ENCODE measurements at regions of chr3 and their contacts with region 1.

Region 1: GRCh38 chr3:50227390-50228183 is 8.4 kb upstream of the GNAI2 start:
- DNase-seq: peak; percentile 89 to 94
- H3K4me3 ChIP-seq: peak overlapping the region; percentile 51 to 88 (median 73)
- H3K27ac ChIP-seq: peak overlapping the region; percentile 86
- H3K4me1 ChIP-seq: peaks cover 0 to 18% (median 6%) of the 10 kb centered on the region in 4 experiments; a peak in 6 of 7 replicates
- H3K27me3 ChIP-seq: peaks cover 0 to 3% (median 2%) of the 10 kb centered on the region in 4 experiments; a peak in 4 of 7 replicates
- CTCF ChIP-seq: peak in 2 of 3 experiments; percentile 67 to 97; a peak in 3 of 4 replicates
- EP300 ChIP-seq: no peak; a peak in 1 of 3 replicates
- POLR2A ChIP-seq: peak in 1 of 2 experiments; percentile 53; a peak in 2 of 3 replicates
- RAD21 ChIP-seq: peak; percentile 90 to 95

Region 2: DNA sequence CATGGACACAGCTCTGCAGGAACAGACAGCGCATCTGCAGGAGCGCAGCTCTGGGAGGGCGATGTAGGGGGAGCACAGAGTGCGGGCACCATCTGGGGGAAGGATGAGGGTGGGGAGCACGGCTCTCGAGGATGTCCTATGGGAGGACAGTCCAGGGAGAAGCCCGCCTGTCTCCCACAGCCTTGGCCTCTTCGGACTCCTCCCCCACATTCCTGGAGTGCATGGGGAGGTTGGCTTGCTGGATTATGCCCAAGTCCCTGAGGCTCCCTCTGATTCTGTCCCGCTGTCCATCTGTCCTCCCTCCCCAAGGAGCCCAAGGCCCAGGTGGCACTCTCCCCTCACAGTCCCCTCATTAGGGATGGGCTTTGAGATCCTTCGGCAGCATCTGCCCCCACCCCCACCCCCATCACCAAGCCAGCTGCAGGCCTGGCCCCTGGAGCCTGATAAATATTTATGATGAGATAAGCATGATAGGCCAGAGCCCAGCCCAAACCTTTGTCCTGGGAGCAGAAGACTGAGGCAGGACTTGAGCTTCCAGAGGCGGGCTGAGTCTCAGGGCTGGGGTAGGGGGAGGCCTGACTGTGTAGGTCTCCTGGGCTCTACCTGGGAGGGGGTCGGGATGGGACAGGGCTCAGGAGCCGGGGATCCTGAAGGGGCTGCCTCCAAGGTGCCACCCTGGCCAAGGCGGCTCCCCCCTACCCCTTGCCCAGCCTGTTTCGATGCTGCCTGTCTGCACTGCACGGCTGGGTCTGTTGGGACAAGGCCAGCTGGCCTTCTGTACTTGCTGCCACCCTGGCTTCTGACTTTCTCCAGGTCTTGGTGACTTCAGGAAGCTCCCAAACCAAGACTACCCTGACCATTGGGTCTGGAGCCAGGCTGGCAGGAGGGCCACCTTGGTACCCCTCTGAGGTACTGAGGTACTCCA is 101.0 kb before region 1 on chr3:
- CTCF ChIA-PET with region 1: interaction called, 11 read pairs
- POLR2A ChIA-PET with region 1: interaction called, 4 read pairs
- DNase-seq: peak in 1 of 2 experiments; percentile 58
- H3K4me3 ChIP-seq: no peak overlapping the region
- H3K27ac ChIP-seq: no peak overlapping the region; the same call in none of the 2 replicates
- H3K4me1 ChIP-seq: peaks cover 4 to 32% (median 23%) of the 10 kb centered on the region in 4 experiments
- H3K27me3 ChIP-seq: no peaks in the 10 kb centered on the region
- CTCF ChIP-seq: no peak
- EP300 ChIP-seq: no peak
- POLR2A ChIP-seq: no peak
- RAD21 ChIP-seq: no peak

Region 3: GRCh38 chr3:50138266-50139200 is 89.1 kb before region 1 on chr3:
- CTCF ChIA-PET with region 1: interaction called, 16 read pairs
- POLR2A ChIA-PET with region 1: no interaction called
- DNase-seq: peak in 1 of 2 experiments; percentile 71
- H3K4me3 ChIP-seq: peak overlapping the region in 3 of 4 experiments; percentile 17 to 45 (median 36); a peak in 3 of 8 replicates
- H3K27ac ChIP-seq: peak overlapping the region; percentile 41; the same call in 1 of the 2 replicates
- H3K4me1 ChIP-seq: peaks cover 4 to 32% (median 28%) of the 10 kb centered on the region in 4 experiments
- H3K27me3 ChIP-seq: no peaks in the 10 kb centered on the region; a peak in 1 of 7 replicates
- CTCF ChIP-seq: no peak
- EP300 ChIP-seq: no peak
- POLR2A ChIP-seq: no peak; a peak in 1 of 3 replicates
- RAD21 ChIP-seq: no peak

Region 4: DNA sequence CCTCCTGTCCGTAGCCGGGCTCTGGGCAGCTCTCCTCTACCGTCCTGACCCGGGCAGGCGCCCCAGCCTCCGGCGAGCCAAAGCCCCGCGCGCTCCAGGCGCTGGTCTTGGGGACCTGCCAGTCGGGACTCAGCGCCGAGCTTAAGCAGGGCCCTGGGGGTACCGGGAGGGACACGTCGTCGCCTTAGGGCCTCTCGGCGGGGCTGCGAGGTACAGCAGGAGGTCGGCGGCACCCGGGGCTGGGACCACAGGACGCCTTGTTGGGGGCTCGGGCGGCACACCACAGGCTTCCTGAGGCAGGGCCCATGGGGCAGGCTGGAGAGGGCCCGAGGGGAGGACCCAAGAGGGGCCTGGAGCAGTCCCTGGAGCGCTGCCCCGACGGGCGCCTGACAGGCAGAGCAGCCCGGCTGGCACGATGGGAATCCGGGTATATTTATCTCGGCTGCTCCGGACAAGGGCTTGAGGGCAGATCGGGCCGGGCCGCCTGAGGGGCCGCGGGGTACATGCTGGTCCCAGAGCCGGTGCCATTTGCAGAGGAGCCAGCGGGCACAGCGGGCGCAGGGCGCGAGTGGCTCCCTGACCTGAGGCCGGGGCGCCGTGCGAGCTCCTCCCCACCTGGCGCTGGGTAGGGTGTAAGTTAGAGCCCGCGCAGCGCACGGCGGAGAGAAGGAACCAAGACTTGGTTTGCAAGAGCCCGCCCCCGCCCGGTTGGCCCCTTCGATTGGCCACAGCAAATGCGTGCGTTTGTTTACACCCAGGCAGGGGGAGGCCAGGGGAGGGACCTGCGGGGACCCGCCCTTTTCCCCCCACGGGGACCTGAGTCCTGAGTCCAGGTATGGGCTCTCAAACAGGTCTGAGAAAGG is 21.9 kb before region 1 on chr3:
- CTCF ChIA-PET with region 1: interaction called, 2,149 read pairs
- POLR2A ChIA-PET with region 1: interaction called, 3 read pairs
- DNase-seq: peak in 1 of 2 experiments; percentile 89
- H3K4me3 ChIP-seq: peak overlapping the region; percentile 33 to 68 (median 58)
- H3K27ac ChIP-seq: no peak overlapping the region
- H3K4me1 ChIP-seq: peaks cover 0 to 25% (median 12%) of the 10 kb centered on the region in 4 experiments; a peak in 6 of 7 replicates
- H3K27me3 ChIP-seq: peaks cover 2 to 28% (median 21%) of the 10 kb centered on the region in 4 experiments
- CTCF ChIP-seq: no peak
- EP300 ChIP-seq: no peak
- POLR2A ChIP-seq: no peak
- RAD21 ChIP-seq: no peak

Region 5: GRCh38 chr3:50245831-50246516 is 18.4 kb after region 1 on chr3:
- CTCF ChIA-PET with region 1: interaction called, 2,149 read pairs
- POLR2A ChIA-PET with region 1: interaction called, 41 read pairs
- DNase-seq: peak in 1 of 2 experiments; percentile 99
- H3K4me3 ChIP-seq: peak overlapping the region in 2 of 4 experiments; percentile 23 to 27; a peak in 4 of 8 replicates
- H3K27ac ChIP-seq: peak overlapping the region; percentile 53
- H3K4me1 ChIP-seq: peaks cover 5 to 48% (median 41%) of the 10 kb centered on the region in 4 experiments
- H3K27me3 ChIP-seq: no peaks in the 10 kb centered on the region
- CTCF ChIP-seq: peak in 2 of 3 experiments; percentile 91 to 97; a peak in 3 of 4 replicates
- EP300 ChIP-seq: peak in 1 of 2 experiments; percentile 69; a peak in 1 of 3 replicates
- POLR2A ChIP-seq: no peak; a peak in 1 of 3 replicates
- RAD21 ChIP-seq: peak; percentile 75 to 91